ENCODE measurements at regions of chr6 and their contacts with region 1.

Region 1: DNA sequence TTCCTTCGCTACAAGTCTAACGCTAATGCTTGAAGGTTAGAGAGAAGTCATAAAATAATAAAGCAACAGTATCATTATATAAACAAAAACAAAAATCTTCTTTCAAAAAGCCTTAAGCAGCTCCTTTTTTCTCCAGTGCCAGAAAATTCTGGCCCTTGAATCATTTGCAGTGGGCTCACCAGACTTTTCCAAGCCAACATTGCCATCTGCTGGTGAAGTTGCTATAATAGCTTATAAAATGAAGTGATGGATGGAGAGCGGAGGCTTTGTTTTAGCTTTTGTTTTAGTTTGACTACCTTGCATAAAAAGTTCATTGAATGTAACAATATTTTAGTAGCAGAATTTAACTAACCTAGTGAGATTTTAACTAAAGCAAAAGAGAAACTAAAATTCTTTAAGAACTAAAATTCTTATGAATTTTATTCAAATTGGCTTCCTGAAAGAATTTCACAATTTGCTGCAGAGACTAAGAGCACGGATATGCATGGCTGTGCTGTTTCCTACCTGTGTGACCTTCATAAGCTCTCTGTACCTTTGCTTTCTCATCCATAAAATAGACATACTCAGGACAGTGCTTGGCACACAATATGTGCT is 44.8 kb upstream of the SLC2A12 start:
- DNase-seq: peak; percentile 71 to 86 (median 78)
- H3K4me3 ChIP-seq: no peak overlapping the region
- H3K27ac ChIP-seq: no peak overlapping the region
- H3K4me1 ChIP-seq: no peaks in the 10 kb centered on the region
- H3K27me3 ChIP-seq: peaks cover 0 to 10% (median 6%) of the 10 kb centered on the region in 5 experiments

Region 2: DNA sequence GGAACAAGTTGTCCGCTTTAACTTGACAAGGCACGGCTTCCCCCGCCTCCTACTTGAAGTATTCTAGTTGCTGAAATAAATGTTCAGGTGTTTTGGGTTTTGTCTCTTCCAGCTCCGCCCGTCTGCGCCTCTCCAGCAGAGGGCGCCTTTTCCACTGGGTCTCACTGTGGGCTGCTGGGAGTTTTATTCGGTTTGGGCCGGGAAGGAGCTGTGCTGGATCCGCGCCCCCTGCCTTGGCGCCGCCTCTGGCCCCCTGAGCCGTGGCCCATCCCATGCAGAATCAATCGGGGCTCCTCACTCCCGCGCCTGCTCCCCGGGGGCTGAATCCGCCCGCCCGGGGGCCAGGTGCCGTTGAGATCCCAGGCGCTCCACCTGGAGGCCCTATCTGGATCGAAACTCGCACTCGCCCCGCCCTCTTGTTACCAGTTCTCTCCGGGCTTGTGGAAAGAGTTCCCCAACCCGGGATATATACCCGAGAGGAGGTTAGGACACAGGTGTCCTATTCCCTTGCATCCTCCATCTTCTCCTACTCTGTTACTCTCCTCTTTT is 259.3 kb before region 1 on chr6:
- CTCF ChIA-PET with region 1: interaction called, 16 read pairs
- POLR2A ChIA-PET with region 1: no interaction called
- DNase-seq: peak; percentile 45 to 68 (median 67)
- H3K4me3 ChIP-seq: peak overlapping the region in 5 of 7 experiments; percentile 29 to 65 (median 40)
- H3K27ac ChIP-seq: no peak overlapping the region
- H3K4me1 ChIP-seq: peaks cover 0 to 7% (median 4%) of the 10 kb centered on the region in 4 experiments
- H3K27me3 ChIP-seq: peaks cover 9 to 48% (median 15%) of the 10 kb centered on the region in 5 experiments

Region 3: DNA sequence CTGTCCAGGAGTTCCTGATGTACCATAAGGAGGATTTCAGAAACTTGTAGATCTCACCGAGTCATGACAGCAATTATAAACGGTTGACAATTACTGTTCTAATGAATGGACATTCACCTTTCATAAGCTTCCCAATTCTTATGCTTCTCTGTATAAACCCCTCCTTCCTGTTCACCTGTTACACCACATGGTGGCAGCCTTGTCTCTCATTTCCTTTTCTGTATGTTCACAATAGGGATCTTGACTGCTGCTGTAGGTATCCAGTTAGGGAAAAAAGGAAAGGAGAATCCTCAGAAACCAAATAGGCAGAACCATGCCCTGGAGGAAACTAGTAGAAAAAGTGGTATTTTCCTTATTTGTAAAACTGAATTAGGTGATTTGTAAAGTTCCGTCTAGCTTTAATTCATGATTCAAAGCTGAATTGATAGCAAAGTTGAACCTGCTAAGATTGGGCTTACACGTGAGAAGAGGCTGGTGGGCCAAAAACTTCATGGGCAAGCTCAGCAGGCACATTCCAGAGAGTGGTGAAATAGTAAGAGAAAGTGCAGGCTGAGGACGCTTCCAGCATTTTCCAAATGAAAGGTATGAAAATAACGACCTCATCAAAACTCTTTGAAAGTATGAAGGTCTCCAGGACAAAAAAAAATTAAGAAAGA is 173.1 kb before region 1 on chr6:
- CTCF ChIA-PET with region 1: interaction called, 211 read pairs
- POLR2A ChIA-PET with region 1: no interaction called
- DNase-seq: peak; percentile 72 to 79 (median 74)
- H3K4me3 ChIP-seq: no peak overlapping the region
- H3K27ac ChIP-seq: no peak overlapping the region
- H3K4me1 ChIP-seq: no peaks in the 10 kb centered on the region
- H3K27me3 ChIP-seq: peaks cover 3 to 40% (median 8%) of the 10 kb centered on the region in 5 experiments

Region 4: GRCh38 chr6:134080171-134080795 is 16.9 kb before region 1 on chr6:
- CTCF ChIA-PET with region 1: interaction called, 36 read pairs
- POLR2A ChIA-PET with region 1: no interaction called
- DNase-seq: peak in 2 of 3 donors; percentile 19 to 32
- H3K4me3 ChIP-seq: no peak overlapping the region
- H3K27ac ChIP-seq: no peak overlapping the region
- H3K4me1 ChIP-seq: peaks cover 0 to 5% (median 2%) of the 10 kb centered on the region in 4 experiments
- H3K27me3 ChIP-seq: peaks cover 0 to 3% (median 2%) of the 10 kb centered on the region in 5 experiments

Region 5: GRCh38 chr6:134138226-134138975 is 41.2 kb after region 1 on chr6:
- CTCF ChIA-PET with region 1: no interaction called
- POLR2A ChIA-PET with region 1: no interaction called
- DNase-seq: no peak
- H3K4me3 ChIP-seq: no peak overlapping the region
- H3K27ac ChIP-seq: no peak overlapping the region
- H3K4me1 ChIP-seq: no peaks in the 10 kb centered on the region
- H3K27me3 ChIP-seq: no peaks in the 10 kb centered on the region

Region 6: DNA sequence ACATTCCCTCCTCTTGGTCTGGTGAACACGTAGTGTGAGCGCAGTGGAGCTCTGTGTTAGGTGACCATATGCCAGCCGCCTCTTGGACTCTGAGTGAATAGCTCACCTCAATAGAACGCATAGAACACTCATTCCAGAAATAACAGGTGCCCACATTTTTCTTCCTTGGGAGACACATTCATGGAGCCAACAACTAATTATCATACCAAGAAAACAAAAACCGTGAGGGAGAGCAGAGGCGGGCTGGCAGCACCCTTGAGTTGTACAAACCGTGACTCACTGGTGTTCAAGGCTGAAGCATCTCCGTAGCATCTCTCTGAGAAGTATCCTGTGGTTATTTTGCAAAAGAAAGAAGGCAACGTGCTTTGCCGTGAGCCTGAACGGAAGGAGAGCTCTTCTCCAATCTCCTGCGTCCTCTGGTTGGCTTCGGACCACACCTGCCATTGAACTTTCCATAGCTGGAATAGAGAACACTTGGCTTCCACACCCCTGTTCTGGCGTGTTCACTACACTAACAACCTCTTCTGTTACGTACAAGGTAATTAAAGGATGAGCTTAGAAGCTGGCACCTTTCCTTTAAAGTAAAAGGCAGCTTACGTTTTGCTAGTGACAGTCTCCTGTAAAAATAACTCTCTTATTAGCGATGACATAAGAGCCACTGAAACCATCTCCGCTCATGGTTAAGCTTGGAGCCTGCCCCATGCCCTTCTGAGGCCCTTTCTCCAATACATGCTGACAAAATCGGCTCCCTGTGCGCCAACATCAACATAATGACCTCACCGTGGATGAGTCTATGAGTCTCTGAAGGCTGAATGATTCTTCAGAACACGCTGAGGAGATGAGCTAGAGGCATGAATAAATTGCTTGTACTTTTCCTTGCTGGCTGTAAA is 250.9 kb after region 1 on chr6:
- CTCF ChIA-PET with region 1: no interaction called
- POLR2A ChIA-PET with region 1: no interaction called
- DNase-seq: no peak
- H3K4me3 ChIP-seq: no peak overlapping the region
- H3K27ac ChIP-seq: no peak overlapping the region
- H3K4me1 ChIP-seq: peaks cover 0 to 28% (median 13%) of the 10 kb centered on the region in 4 experiments
- H3K27me3 ChIP-seq: no peaks in the 10 kb centered on the region